SK-N-SH (cell line): ENCODE measurements at regions of chr15 and their contacts with region 1.

Region 1: GRCh38 chr15:57861036-57861638 is 154.6 kb downstream of the POLR2M start:
- DNase-seq: peak; percentile 24
- H3K4me3 ChIP-seq: no peak overlapping the region; a peak in 1 of 4 replicates
- H3K27ac ChIP-seq: no peak overlapping the region
- H3K4me1 ChIP-seq: no peaks in the 10 kb centered on the region
- H3K27me3 ChIP-seq: no peaks in the 10 kb centered on the region; the same call in 1 of the 2 replicates
- CTCF ChIP-seq: peak; percentile 90
- EP300 ChIP-seq: no peak
- RAD21 ChIP-seq: peak; percentile 81

Region 2: GRCh38 chr15:57527382-57528091 is 333.6 kb before region 1 on chr15:
- CTCF ChIA-PET with region 1: no interaction called
- POLR2A ChIA-PET with region 1: no interaction called
- DNase-seq: peak; percentile 51
- H3K4me3 ChIP-seq: no peak overlapping the region
- H3K27ac ChIP-seq: no peak overlapping the region
- H3K4me1 ChIP-seq: peaks cover 0 to 10% of the 10 kb centered on the region in 2 experiments; a peak in 1 of 4 replicates
- H3K27me3 ChIP-seq: no peaks in the 10 kb centered on the region
- CTCF ChIP-seq: peak; percentile 71
- EP300 ChIP-seq: no peak
- RAD21 ChIP-seq: peak; percentile 95

Region 3: DNA sequence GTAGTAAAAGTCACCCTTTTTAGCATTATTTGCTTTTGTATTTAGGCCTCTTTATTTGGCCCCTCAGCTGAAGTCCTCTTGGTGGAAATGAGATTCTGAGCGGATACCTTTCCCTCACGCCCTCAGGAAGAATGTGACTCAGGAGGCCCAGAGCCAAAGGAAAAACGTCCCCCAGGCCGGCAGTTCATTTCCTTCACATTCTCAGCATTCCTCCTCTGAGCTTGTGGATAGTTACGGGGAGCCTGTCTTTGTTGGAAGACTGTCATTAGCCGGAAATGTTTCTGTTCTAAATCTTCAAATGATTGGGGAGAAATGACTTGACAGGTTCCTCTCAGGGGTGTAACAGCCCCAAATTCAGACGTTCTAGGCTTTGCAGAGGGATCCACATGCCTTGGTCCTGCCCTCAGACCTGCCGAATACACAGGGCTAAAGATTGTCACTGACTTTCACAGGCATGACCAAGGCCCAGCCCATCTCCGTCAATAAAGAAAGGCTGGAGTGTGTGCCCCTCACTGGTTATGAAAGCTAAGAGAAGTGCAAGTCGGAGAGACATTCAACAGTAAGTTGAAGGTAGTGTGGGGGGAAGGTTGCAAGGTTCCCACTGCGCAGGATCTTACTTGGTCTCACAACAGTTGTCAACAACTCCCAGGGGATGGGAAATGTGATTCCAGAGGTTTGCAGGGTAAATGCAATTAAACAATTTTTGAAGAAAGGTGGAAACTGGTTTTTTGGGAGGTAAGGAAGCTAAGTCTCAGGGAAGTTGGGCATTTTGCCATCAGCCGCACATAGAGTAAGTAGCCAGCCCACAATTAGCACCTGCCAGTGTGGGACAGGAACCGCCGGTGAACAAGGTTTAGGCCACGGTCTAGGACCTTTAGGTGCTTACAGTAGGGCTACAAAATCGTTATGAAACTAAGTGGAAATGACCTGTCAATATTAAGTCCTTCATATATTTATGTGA is 309.1 kb before region 1 on chr15:
- CTCF ChIA-PET with region 1: interaction called, 13 read pairs
- POLR2A ChIA-PET with region 1: no interaction called
- DNase-seq: no peak
- H3K4me3 ChIP-seq: no peak overlapping the region
- H3K27ac ChIP-seq: peak overlapping the region; percentile 69 to 72
- H3K4me1 ChIP-seq: peaks cover 25 to 35% of the 10 kb centered on the region in 2 experiments; a peak in 3 of 4 replicates
- H3K27me3 ChIP-seq: no peaks in the 10 kb centered on the region
- CTCF ChIP-seq: no peak
- EP300 ChIP-seq: peak; percentile 16 to 76; a peak in 2 of 4 replicates
- RAD21 ChIP-seq: no peak

Region 4: GRCh38 chr15:57586661-57587424 is 274.3 kb before region 1 on chr15:
- CTCF ChIA-PET with region 1: no interaction called
- POLR2A ChIA-PET with region 1: no interaction called
- DNase-seq: no peak
- H3K4me3 ChIP-seq: no peak overlapping the region
- H3K27ac ChIP-seq: no peak overlapping the region
- H3K4me1 ChIP-seq: peaks cover 0 to 5% of the 10 kb centered on the region in 2 experiments; a peak in 1 of 4 replicates
- H3K27me3 ChIP-seq: peaks cover 7% of the 10 kb centered on the region; the same call in 1 of the 2 replicates
- CTCF ChIP-seq: no peak
- EP300 ChIP-seq: no peak
- RAD21 ChIP-seq: no peak

Region 5: DNA sequence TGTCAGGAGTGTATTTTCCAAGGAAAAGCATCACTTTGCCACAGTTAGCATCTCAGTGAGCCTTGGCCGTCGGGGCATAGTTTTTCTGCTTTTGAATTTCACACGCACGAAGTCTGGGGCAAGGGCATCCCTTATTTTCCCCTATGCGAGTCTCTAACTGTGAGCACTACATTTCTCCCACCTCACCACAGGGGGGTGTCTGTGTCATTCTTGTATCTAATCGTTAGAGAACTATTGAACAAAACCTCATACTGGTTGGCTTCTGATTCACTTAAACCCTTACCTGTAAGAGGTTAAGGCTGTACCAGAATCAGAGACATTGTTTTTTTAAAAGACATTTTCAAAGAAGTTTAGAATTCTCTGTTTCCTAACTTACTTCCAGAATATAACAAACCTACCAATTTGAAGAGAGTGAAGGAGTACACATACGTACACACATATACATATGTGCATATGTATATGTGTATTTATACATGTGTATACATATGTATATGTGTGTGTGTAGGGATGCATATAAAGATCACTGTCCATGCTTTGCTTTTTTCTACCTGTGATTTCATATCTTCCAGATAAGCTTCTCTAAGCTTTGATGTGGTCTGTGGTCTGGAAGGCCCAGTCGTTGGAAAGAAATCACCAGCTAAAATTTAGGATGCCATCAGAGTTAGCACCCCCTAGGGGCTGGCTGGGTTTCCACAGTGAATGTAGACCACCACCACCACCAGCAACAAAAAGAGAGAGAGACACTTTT is 220.0 kb before region 1 on chr15:
- CTCF ChIA-PET with region 1: interaction called, 13 read pairs
- POLR2A ChIA-PET with region 1: no interaction called
- DNase-seq: peak; percentile 49
- H3K4me3 ChIP-seq: no peak overlapping the region
- H3K27ac ChIP-seq: no peak overlapping the region
- H3K4me1 ChIP-seq: no peaks in the 10 kb centered on the region
- H3K27me3 ChIP-seq: no peaks in the 10 kb centered on the region; the same call in 1 of the 2 replicates
- CTCF ChIP-seq: peak; percentile 59
- EP300 ChIP-seq: no peak
- RAD21 ChIP-seq: peak; percentile 63

Region 6: DNA sequence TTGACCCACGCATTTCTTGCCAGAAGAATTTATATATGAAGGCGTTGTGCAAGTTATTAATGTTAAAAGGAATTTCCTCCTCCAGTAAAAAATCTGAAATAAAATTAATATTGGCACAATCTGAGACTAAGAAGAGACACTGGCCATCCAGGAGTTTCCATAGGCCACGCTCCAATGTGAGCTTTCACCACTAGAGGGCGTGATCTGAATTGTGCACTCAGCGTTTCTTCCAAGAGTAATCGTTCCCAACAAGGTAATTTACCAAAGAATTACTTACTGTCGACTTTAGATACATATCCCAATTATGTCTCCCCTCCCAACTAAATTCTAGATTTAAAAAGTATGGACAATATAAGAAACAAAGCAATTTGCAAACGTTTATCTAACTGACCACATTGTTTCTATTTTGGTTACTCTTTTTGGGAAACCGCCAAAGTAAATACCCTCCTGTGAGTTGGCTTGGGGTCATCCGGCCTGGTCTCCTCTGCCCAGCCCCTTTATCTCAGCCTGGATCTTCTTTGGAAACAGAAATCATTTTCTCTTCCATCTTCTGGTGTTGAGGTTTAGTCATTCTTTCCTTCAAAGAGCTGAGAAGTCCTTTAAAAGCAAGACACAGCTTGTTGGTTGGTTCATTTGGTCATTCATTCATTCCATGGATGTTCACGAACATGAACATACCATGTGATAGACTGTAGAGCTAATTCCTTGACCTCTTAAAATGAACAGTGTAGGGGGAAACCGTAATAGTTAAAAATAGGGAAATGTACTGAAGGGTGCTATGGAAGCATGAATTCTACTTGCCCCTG is 128.4 kb before region 1 on chr15:
- CTCF ChIA-PET with region 1: interaction called, 44 read pairs
- POLR2A ChIA-PET with region 1: no interaction called
- DNase-seq: peak; percentile 51
- H3K4me3 ChIP-seq: peak overlapping the region in 1 of 2 experiments; percentile 27; a peak in 1 of 4 replicates
- H3K27ac ChIP-seq: peak overlapping the region in 1 of 2 experiments; percentile 29; a peak in 2 of 4 replicates
- H3K4me1 ChIP-seq: peaks cover 9% of the 10 kb centered on the region in 2 experiments; a peak in 3 of 4 replicates
- H3K27me3 ChIP-seq: no peaks in the 10 kb centered on the region
- CTCF ChIP-seq: peak; percentile 98
- EP300 ChIP-seq: peak in 1 of 2 experiments; percentile 42; a peak in 1 of 4 replicates
- RAD21 ChIP-seq: peak; percentile 56

Region 7: GRCh38 chr15:57827021-57827420 is 34.1 kb before region 1 on chr15:
- CTCF ChIA-PET with region 1: interaction called, 11 read pairs
- POLR2A ChIA-PET with region 1: no interaction called
- DNase-seq: no peak
- H3K4me3 ChIP-seq: no peak overlapping the region
- H3K27ac ChIP-seq: no peak overlapping the region
- H3K4me1 ChIP-seq: no peaks in the 10 kb centered on the region
- H3K27me3 ChIP-seq: no peaks in the 10 kb centered on the region; the same call in 1 of the 2 replicates
- CTCF ChIP-seq: no peak
- EP300 ChIP-seq: no peak
- RAD21 ChIP-seq: no peak

Region 8: GRCh38 chr15:57873564-57874209 is 12.6 kb after region 1 on chr15:
- CTCF ChIA-PET with region 1: interaction called, 27 read pairs
- POLR2A ChIA-PET with region 1: no interaction called
- DNase-seq: no peak
- H3K4me3 ChIP-seq: no peak overlapping the region
- H3K27ac ChIP-seq: peak overlapping the region in 1 of 2 experiments; percentile 55; a peak in 2 of 4 replicates
- H3K4me1 ChIP-seq: peaks cover 0 to 7% of the 10 kb centered on the region in 2 experiments; a peak in 2 of 4 replicates
- H3K27me3 ChIP-seq: no peaks in the 10 kb centered on the region
- CTCF ChIP-seq: no peak
- EP300 ChIP-seq: 0 out of 4 replicates have a peak, but pooled peaks of 1 of the 2 experiments have one; percentile 31
- RAD21 ChIP-seq: no peak

Region 9: DNA sequence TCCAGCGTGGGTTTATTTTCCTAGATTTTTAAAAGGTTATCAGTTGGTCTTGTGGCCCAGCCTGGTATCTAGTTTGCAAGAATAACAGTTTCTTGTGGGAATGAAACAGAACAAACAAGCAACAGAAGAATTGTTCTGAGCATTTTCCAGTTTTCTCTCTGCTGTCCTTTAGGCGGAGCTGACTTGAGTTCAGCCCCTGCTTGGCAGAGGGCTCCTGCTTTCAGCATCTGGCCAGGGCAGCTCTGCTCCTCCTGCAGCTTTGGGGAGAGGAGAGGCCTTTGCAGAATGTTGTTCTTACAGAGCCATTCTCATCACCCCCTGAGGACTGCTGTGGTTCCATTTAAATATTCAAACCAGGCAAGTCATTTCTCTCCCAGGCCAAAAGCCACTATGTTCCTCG is 86.6 kb after region 1 on chr15:
- CTCF ChIA-PET with region 1: interaction called, 11 read pairs
- POLR2A ChIA-PET with region 1: no interaction called
- DNase-seq: peak; percentile 32
- H3K4me3 ChIP-seq: no peak overlapping the region
- H3K27ac ChIP-seq: peak overlapping the region in 1 of 2 experiments; percentile 6; a peak in 1 of 4 replicates
- H3K4me1 ChIP-seq: peaks cover 0 to 21% of the 10 kb centered on the region in 2 experiments; a peak in 2 of 4 replicates
- H3K27me3 ChIP-seq: 0 out of 2 replicates have a peak, but pooled peaks cover 8% of the 10 kb centered on the region
- CTCF ChIP-seq: no peak
- EP300 ChIP-seq: no peak
- RAD21 ChIP-seq: no peak

Region 10: DNA sequence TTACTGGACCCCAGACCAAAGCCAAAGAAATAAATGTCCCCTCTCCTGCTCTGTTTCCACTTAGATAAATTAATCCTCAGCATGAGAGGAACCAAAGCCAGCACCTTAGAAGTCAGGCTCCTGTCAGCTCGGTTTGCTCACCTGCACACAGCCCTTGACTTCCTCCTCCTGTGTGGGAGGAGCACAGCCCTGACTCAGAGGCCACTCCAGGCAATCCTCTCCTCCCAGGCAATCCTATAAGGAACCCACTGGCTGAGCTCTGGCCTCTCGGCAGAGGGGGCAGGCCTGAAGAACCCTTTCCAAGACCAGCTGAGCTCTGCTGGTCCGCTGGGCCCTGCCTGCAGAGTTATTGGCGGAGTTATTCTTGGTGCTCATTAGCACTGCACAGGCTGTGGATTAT is 601.4 kb after region 1 on chr15:
- CTCF ChIA-PET with region 1: no interaction called
- POLR2A ChIA-PET with region 1: no interaction called
- DNase-seq: no peak
- H3K4me3 ChIP-seq: no peak overlapping the region
- H3K27ac ChIP-seq: no peak overlapping the region
- H3K4me1 ChIP-seq: no peaks in the 10 kb centered on the region; a peak in 1 of 4 replicates
- H3K27me3 ChIP-seq: no peaks in the 10 kb centered on the region
- CTCF ChIP-seq: no peak
- EP300 ChIP-seq: no peak
- RAD21 ChIP-seq: no peak